IMR-90 (cell line): ENCODE measurements at regions of chr12 and their contacts with region 1.

Region 1: DNA sequence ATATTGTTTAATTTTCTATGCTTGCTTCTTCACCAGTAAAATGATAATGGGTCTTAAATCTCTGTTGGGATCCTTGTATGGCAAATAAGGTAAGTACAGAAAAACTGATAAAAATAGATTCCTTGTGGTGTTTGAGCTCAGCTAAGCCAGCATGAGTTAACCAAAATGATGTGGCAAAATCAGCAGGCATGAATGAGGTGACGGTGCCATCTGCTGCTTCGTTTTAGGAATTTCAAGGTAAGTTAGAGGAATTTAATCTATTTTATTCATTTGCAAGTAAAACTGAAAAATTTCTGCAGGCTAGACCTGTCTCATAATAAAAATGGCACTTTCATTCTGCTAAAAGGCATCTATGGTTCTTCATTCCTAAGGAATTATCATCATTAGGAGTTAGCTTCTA is 10.0 kb upstream of the CLEC7A start:
- DNase-seq: peak; percentile 70
- ATAC-seq: peak; percentile 67
- H3K4me3 ChIP-seq: no peak overlapping the region
- H3K27ac ChIP-seq: no peak overlapping the region
- H3K4me1 ChIP-seq: peaks cover 2% of the 10 kb centered on the region; the same call in 1 of the 2 replicates
- H3K27me3 ChIP-seq: no peaks in the 10 kb centered on the region
- CTCF ChIP-seq: peak; percentile 82
- POLR2A ChIP-seq: no peak
- RAD21 ChIP-seq: peak; percentile 86

Region 2: GRCh38 chr12:9813821-9814809 is 325.9 kb before region 1 on chr12:
- CTCF ChIA-PET with region 1: interaction called, 4 read pairs
- POLR2A ChIA-PET with region 1: no interaction called
- dilution Hi-C with region 1: no loop called
- in situ Hi-C with region 1: no loop called
- intact Hi-C with region 1: loop called (anchors 2 kb)
- DNase-seq: peak; percentile 17
- ATAC-seq: peak; percentile 100
- H3K4me3 ChIP-seq: no peak overlapping the region; the same call in 1 of the 2 replicates
- H3K27ac ChIP-seq: no peak overlapping the region
- H3K4me1 ChIP-seq: no peaks in the 10 kb centered on the region
- H3K27me3 ChIP-seq: peaks cover 11% of the 10 kb centered on the region
- CTCF ChIP-seq: peak; percentile 78
- POLR2A ChIP-seq: no peak
- RAD21 ChIP-seq: peak; percentile 71

Region 3: GRCh38 chr12:9906873-9907272 is 233.1 kb before region 1 on chr12:
- CTCF ChIA-PET with region 1: no interaction called
- POLR2A ChIA-PET with region 1: no interaction called
- dilution Hi-C with region 1: no loop called
- in situ Hi-C with region 1: no loop called
- intact Hi-C with region 1: no loop called
- DNase-seq: no peak
- ATAC-seq: no peak
- H3K4me3 ChIP-seq: no peak overlapping the region
- H3K27ac ChIP-seq: no peak overlapping the region
- H3K4me1 ChIP-seq: no peaks in the 10 kb centered on the region
- H3K27me3 ChIP-seq: no peaks in the 10 kb centered on the region
- CTCF ChIP-seq: no peak
- POLR2A ChIP-seq: no peak
- RAD21 ChIP-seq: no peak

Region 4: DNA sequence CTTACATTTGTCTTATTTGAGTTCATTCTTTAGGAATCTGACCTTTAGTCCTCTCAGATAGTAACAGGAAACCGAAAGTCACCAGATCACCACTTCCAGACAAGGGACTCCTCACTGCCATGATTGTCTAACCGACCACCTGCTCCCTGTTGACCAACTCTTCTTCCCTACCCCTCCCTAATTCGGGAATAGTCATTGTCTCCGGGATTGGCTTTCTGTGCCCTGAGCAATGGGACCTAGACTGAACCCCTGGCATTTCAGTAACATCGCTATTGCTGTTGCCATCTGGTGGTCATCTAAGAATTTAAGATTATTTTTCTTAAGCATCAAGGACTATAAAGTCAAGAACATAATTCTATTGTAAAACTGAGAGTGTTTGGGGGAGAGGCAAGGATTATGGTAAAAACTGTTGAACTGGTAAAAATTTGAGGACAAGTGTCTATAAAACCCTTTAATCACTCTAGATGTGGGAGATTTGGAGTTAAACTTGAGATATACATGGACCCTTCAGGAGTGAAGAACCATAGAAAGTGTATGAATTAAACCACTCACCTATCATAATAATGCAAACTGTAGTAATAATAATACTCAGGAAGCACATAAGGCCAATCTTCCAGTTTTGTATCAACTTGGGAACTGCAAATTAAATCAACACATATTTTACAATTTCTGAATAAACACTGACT is 214.2 kb before region 1 on chr12:
- CTCF ChIA-PET with region 1: no interaction called
- POLR2A ChIA-PET with region 1: no interaction called
- dilution Hi-C with region 1: no loop called
- in situ Hi-C with region 1: no loop called
- intact Hi-C with region 1: loop called (anchors 5 kb)
- DNase-seq: peak; percentile 41
- ATAC-seq: peak; percentile 75
- H3K4me3 ChIP-seq: no peak overlapping the region
- H3K27ac ChIP-seq: no peak overlapping the region
- H3K4me1 ChIP-seq: no peaks in the 10 kb centered on the region
- H3K27me3 ChIP-seq: no peaks in the 10 kb centered on the region; the same call in 1 of the 2 replicates
- CTCF ChIP-seq: peak; percentile 55
- POLR2A ChIP-seq: no peak
- RAD21 ChIP-seq: peak; percentile 47

Region 5: GRCh38 chr12:10012630-10013330 is 127.2 kb before region 1 on chr12:
- CTCF ChIA-PET with region 1: interaction called, 16 read pairs
- POLR2A ChIA-PET with region 1: no interaction called
- dilution Hi-C with region 1: no loop called
- in situ Hi-C with region 1: no loop called
- intact Hi-C with region 1: loop called (anchors 1 kb)
- DNase-seq: no peak
- ATAC-seq: no peak
- H3K4me3 ChIP-seq: no peak overlapping the region
- H3K27ac ChIP-seq: no peak overlapping the region
- H3K4me1 ChIP-seq: peaks cover 5% of the 10 kb centered on the region
- H3K27me3 ChIP-seq: peaks cover 2% of the 10 kb centered on the region
- CTCF ChIP-seq: no peak
- POLR2A ChIP-seq: no peak
- RAD21 ChIP-seq: no peak

Region 6: DNA sequence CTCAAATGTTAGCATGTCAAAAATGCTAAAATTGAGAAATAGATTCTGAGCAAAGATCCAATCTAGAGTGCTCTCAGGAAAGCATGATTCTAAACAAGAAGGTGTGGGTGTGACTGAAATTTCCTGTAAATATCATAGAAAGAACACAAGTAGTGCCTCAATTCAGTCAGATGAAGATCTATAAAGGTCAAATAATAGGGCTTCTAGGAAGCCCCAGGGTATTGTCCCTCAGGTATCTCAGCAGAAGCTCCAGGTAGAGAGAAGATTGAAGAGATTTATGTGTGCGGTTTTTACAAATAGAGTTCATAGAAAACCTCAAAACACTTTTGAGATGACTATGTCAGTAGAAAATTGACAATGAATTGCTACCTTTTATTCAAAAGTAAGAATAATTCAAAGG is 180.6 kb after region 1 on chr12:
- CTCF ChIA-PET with region 1: no interaction called
- POLR2A ChIA-PET with region 1: no interaction called
- dilution Hi-C with region 1: no loop called
- in situ Hi-C with region 1: no loop called
- intact Hi-C with region 1: no loop called
- DNase-seq: no peak
- ATAC-seq: no peak
- H3K4me3 ChIP-seq: no peak overlapping the region
- H3K27ac ChIP-seq: no peak overlapping the region
- H3K4me1 ChIP-seq: no peaks in the 10 kb centered on the region
- H3K27me3 ChIP-seq: peaks cover 15% of the 10 kb centered on the region
- CTCF ChIP-seq: no peak
- POLR2A ChIP-seq: no peak
- RAD21 ChIP-seq: no peak